A673 (cell line): ENCODE measurements at regions of chr12 and their contacts with region 1.

Region 1: GRCh38 chr12:50174971-50175715 is 8.0 kb upstream of the CERS5 start:
- DNase-seq: peak; percentile 86
- H3K4me3 ChIP-seq: no peak overlapping the region
- H3K27ac ChIP-seq: no peak overlapping the region
- H3K4me1 ChIP-seq: peaks cover 3% of the 10 kb centered on the region
- H3K27me3 ChIP-seq: no peaks in the 10 kb centered on the region
- CTCF ChIP-seq: peak; percentile 73

Region 2: GRCh38 chr12:50132505-50133135 is 42.5 kb before region 1 on chr12:
- CTCF ChIA-PET with region 1: no interaction called
- POLR2A ChIA-PET with region 1: no interaction called
- intact Hi-C with region 1: loop called (anchors 5 kb)
- DNase-seq: peak; percentile 61
- H3K4me3 ChIP-seq: no peak overlapping the region
- H3K27ac ChIP-seq: no peak overlapping the region
- H3K4me1 ChIP-seq: no peaks in the 10 kb centered on the region
- H3K27me3 ChIP-seq: no peaks in the 10 kb centered on the region
- CTCF ChIP-seq: peak; percentile 74

Region 3: GRCh38 chr12:50234347-50234746 is 59.2 kb after region 1 on chr12:
- CTCF ChIA-PET with region 1: interaction called, 10 read pairs
- POLR2A ChIA-PET with region 1: no interaction called
- intact Hi-C with region 1: no loop called
- DNase-seq: no peak
- H3K4me3 ChIP-seq: no peak overlapping the region
- H3K27ac ChIP-seq: no peak overlapping the region
- H3K4me1 ChIP-seq: no peaks in the 10 kb centered on the region
- H3K27me3 ChIP-seq: no peaks in the 10 kb centered on the region
- CTCF ChIP-seq: no peak